SK-N-SH (cell line): ENCODE measurements at regions of chr6 and their contacts with region 1.

Region 1: DNA sequence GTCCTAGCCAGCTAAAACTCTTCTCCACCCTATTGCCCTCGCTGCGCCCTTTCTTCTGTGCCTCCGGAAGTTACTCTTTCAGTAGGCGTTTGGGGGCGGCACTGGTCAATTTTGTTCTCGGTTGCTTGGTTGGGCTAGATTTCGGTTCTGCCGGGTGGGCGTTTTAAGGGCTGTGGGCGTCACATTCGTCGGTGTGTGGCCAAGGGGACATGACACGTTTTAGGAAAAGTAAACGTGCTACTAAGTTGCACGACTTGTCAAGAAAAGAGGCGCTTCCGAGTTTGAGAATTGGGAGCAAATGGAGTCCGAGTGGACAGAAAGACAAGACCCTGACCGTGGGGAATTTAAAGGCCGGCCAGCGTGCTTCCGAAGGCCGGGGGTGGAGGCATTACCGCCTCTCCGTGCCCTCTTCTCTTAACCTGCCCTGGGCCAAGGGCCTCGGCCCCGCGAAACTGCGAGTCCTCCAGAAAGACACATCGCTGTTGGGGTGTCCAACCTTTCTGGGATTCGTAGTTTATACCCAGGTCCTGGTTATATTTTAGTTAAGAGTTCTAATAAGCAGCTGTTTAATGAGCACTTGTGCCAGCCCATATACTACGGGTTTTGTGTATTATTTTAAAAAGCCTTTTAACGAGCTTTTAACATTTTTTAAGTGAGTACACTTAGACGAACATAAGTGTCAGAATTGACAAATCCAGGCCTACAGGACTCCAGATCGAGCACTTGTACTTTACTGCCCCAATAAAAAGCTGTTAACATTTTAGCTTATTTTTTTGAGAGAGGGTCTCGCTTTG is 661 bp upstream of the BAG6 start:
- DNase-seq: peak; percentile 87
- H3K4me3 ChIP-seq: peak overlapping the region; percentile 64 to 69
- H3K27ac ChIP-seq: peak overlapping the region; percentile 96 to 99
- H3K4me1 ChIP-seq: peaks cover 7 to 11% of the 10 kb centered on the region in 2 experiments; a peak in 3 of 4 replicates
- H3K27me3 ChIP-seq: no peaks in the 10 kb centered on the region
- CTCF ChIP-seq: no peak
- EP300 ChIP-seq: no peak
- RAD21 ChIP-seq: peak; percentile 5; the same call in 1 of the 2 replicates

Region 2: GRCh38 chr6:31568537-31568961 is 84.6 kb before region 1 on chr6:
- CTCF ChIA-PET with region 1: no interaction called
- POLR2A ChIA-PET with region 1: no interaction called
- DNase-seq: no peak
- H3K4me3 ChIP-seq: no peak overlapping the region
- H3K27ac ChIP-seq: no peak overlapping the region
- H3K4me1 ChIP-seq: no peaks in the 10 kb centered on the region
- H3K27me3 ChIP-seq: no peaks in the 10 kb centered on the region
- CTCF ChIP-seq: no peak
- EP300 ChIP-seq: no peak
- RAD21 ChIP-seq: no peak

Region 3: GRCh38 chr6:31619805-31620585 is 33.1 kb before region 1 on chr6:
- CTCF ChIA-PET with region 1: no interaction called
- POLR2A ChIA-PET with region 1: interaction called, 18 read pairs
- DNase-seq: peak; percentile 96
- H3K4me3 ChIP-seq: peak overlapping the region; percentile 68 to 75
- H3K27ac ChIP-seq: peak overlapping the region; percentile 99
- H3K4me1 ChIP-seq: peaks cover 10 to 11% of the 10 kb centered on the region in 2 experiments
- H3K27me3 ChIP-seq: no peaks in the 10 kb centered on the region
- CTCF ChIP-seq: no peak
- EP300 ChIP-seq: no peak; a peak in 1 of 4 replicates
- RAD21 ChIP-seq: no peak

Region 4: GRCh38 chr6:31639449-31639861 is 13.7 kb before region 1 on chr6:
- CTCF ChIA-PET with region 1: interaction called, 5 read pairs
- POLR2A ChIA-PET with region 1: interaction called, 13 read pairs
- DNase-seq: no peak
- H3K4me3 ChIP-seq: no peak overlapping the region
- H3K27ac ChIP-seq: peak overlapping the region in 1 of 2 experiments; percentile 65; a peak in 2 of 4 replicates
- H3K4me1 ChIP-seq: no peaks in the 10 kb centered on the region
- H3K27me3 ChIP-seq: no peaks in the 10 kb centered on the region
- CTCF ChIP-seq: no peak
- EP300 ChIP-seq: no peak
- RAD21 ChIP-seq: no peak

Region 5: GRCh38 chr6:31665501-31666336 is 12.6 kb after region 1 on chr6 and contains the start of gene CSNK2B:
- CTCF ChIA-PET with region 1: interaction called, 10 read pairs
- POLR2A ChIA-PET with region 1: interaction called, 20 read pairs
- DNase-seq: peak; percentile 96
- H3K4me3 ChIP-seq: peak within 1 kb of the TSS; percentile 86 to 89
- H3K27ac ChIP-seq: peak within 1 kb of the TSS; percentile 87 to 92
- H3K4me1 ChIP-seq: peaks cover 17 to 18% of the 10 kb centered on the region in 2 experiments; a peak in 3 of 4 replicates
- H3K27me3 ChIP-seq: no peaks in the 10 kb centered on the region
- CTCF ChIP-seq: no peak
- EP300 ChIP-seq: peak in 1 of 2 experiments; percentile 5; a peak in 1 of 4 replicates
- RAD21 ChIP-seq: no peak
- polyA plus RNA-seq, gene CSNK2B: 97.3 and 101 TPM in 2 replicates

Region 6: GRCh38 chr6:31702819-31703522 is 49.8 kb after region 1 on chr6 and contains the start of gene ABHD16A:
- CTCF ChIA-PET with region 1: no interaction called
- POLR2A ChIA-PET with region 1: no interaction called
- DNase-seq: peak; percentile 97
- H3K4me3 ChIP-seq: peak within 1 kb of the TSS; percentile 81 to 98
- H3K27ac ChIP-seq: peak within 1 kb of the TSS; percentile 87 to 89
- H3K4me1 ChIP-seq: peaks cover 0 to 15% of the 10 kb centered on the region in 2 experiments; a peak in 2 of 4 replicates
- H3K27me3 ChIP-seq: no peaks in the 10 kb centered on the region
- CTCF ChIP-seq: no peak
- EP300 ChIP-seq: peak in 1 of 2 experiments; percentile 28; a peak in 2 of 4 replicates
- RAD21 ChIP-seq: no peak
- polyA plus RNA-seq, gene ABHD16A: 49.3 and 52.9 TPM in 2 replicates